PC-3 (cell line): ENCODE measurements at regions of chr2 and their contacts with region 1.

Region 1: DNA sequence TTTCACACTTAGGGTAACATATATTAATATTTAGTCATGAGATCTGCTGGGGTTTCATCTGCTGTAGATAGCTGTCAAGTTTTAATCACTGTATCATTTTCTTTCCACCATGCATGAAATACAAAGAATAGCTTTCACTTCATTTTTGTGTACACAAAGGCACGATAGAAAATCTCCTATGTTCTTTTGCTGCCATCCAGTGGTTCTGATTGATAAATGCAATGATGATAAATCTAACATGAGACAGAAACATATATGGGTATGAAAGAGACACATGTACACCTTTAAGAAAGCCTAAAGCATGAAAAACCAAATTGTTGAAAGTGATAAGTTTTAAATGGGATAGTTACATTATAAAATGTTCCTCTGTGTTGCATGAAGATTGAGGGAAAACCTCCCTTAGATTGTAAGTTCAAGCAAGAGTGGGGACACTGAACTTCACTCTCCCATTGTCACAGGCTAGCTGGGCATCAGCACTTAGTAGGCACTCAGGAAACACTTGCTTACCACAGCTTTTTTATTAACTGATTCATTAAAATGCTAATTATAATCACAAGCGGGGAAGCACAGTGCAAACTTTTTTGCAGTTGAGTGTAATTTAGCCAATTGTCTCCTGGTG is 31.2 kb downstream of the C1D start:
- DNase-seq: peak; percentile 85
- ATAC-seq: peak; percentile 73
- H3K4me3 ChIP-seq: no peak overlapping the region
- H3K27ac ChIP-seq: no peak overlapping the region
- H3K4me1 ChIP-seq: peaks cover 14% of the 10 kb centered on the region
- H3K27me3 ChIP-seq: no peaks in the 10 kb centered on the region
- CTCF ChIP-seq: peak; percentile 88

Region 2: DNA sequence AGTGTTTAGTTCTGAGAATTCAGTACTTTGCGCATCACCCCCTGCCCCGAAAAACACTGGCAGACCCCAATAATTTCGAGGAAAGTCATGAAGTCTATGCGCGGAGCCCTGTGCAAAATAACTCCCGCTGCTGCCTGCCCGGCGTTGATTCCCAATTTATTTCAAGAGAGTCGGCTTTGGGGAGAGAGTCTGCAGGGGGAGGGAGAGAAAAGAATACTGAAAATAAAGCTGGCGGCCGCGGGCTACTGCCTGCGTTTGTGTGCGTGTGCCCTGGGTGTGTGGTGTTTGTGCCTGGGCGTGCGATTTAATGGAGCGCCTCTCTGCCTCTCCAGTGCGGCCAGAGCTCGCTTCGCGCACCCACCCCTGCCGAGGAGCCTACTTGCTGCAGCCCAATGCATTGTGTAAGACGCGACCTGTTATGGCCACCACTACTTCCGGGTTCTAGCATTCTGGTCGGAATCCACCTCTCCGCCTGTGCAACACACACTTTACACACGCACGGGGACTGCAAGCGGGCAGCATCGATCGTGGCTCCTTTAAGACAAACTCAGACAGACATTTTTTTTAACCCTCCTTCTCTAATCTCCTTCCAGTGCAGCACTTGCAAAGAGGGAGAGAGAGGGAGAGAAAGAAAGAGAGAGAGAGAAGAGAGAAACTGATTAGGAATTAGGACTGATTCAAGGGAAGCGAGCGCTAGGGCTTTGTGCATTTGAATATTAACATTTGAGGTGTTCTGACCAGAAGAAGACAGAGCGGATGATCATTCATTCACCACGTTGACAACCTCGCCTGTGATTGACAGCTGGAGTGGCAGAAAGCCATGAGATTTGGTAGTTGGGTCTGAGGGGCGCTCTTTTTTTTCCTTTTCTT is 1596.7 kb before region 1 on chr2 and contains the start of gene MEIS1:
- CTCF ChIA-PET with region 1: no interaction called
- POLR2A ChIA-PET with region 1: no interaction called
- intact Hi-C with region 1: loop called (anchors 5 kb)
- DNase-seq: peak; percentile 90
- ATAC-seq: peak; percentile 77
- H3K4me3 ChIP-seq: peak within 1 kb of the TSS; percentile 91
- H3K27ac ChIP-seq: peak within 1 kb of the TSS; percentile 55
- H3K4me1 ChIP-seq: no peaks in the 10 kb centered on the region
- H3K27me3 ChIP-seq: no peaks in the 10 kb centered on the region
- CTCF ChIP-seq: no peak
- total RNA-seq, gene MEIS1: 4.1 and 5.9 TPM in 2 replicates

Region 3: DNA sequence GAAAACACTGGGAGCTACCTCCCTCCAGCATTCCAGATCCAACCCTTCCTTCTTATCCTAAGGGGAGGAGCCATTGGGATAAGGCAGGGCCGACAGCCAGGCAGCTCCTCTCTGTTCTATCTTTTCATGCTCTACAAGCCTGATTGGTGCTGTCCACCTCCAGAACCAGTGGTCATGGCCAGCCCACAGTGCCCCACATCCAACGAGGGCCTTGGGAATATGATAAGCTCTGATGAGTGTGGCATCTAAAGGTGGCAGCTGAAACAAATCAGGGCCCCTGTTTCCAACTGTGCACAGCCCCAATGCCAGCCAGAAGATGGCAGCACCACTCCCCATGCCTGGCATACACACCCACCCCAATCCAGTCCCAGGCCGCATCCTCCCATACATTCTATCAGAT is 298.1 kb before region 1 on chr2:
- CTCF ChIA-PET with region 1: interaction called, 4 read pairs
- POLR2A ChIA-PET with region 1: no interaction called
- intact Hi-C with region 1: loop called (anchors 1 kb)
- DNase-seq: peak; percentile 62
- ATAC-seq: peak; percentile 98
- H3K4me3 ChIP-seq: no peak overlapping the region
- H3K27ac ChIP-seq: no peak overlapping the region
- H3K4me1 ChIP-seq: no peaks in the 10 kb centered on the region
- H3K27me3 ChIP-seq: no peaks in the 10 kb centered on the region; the same call in 1 of the 2 replicates
- CTCF ChIP-seq: peak; percentile 74

Region 4: DNA sequence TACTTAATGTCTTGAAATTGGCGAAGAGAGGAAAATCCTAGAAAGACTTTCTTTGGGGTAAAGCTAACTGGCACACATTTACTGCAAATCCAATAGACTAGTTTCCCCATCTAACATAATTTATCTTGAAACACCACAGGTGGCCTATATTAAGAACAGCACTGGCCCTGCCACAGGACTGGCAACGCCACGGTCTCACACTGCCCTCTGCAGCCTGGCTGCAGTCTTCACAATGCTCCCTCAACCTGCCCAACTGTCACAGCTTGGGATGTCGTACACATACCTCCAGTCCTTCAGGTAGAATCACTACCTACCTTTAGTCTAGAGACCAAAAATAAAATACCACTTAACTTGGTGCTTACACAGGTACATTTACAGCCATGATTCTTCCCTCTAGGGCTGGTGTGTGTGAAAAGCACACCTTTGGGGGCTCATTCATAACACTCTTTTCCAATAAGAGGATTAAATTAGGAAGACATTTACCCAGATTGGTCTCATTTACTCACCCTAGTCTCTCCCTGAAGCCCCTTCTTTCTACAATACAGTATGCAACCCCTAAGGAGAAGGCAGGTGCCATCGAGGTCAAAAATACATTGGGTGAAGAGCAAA is 191.1 kb before region 1 on chr2:
- CTCF ChIA-PET with region 1: interaction called, 5 read pairs
- POLR2A ChIA-PET with region 1: no interaction called
- intact Hi-C with region 1: loop called (anchors 1 kb)
- DNase-seq: peak; percentile 84
- ATAC-seq: peak; percentile 99
- H3K4me3 ChIP-seq: no peak overlapping the region
- H3K27ac ChIP-seq: no peak overlapping the region
- H3K4me1 ChIP-seq: peaks cover 9% of the 10 kb centered on the region
- H3K27me3 ChIP-seq: no peaks in the 10 kb centered on the region
- CTCF ChIP-seq: peak; percentile 97

Region 5: GRCh38 chr2:67846370-67847070 is 185.1 kb before region 1 on chr2:
- CTCF ChIA-PET with region 1: interaction called, 5 read pairs
- POLR2A ChIA-PET with region 1: no interaction called
- intact Hi-C with region 1: loop called (anchors 1 kb)
- DNase-seq: peak; percentile 98
- ATAC-seq: peak; percentile 71
- H3K4me3 ChIP-seq: peak overlapping the region; percentile 51
- H3K27ac ChIP-seq: 0 out of 2 replicates have a peak overlapping the region, but pooled peaks have one; percentile 2
- H3K4me1 ChIP-seq: peaks cover 8% of the 10 kb centered on the region
- H3K27me3 ChIP-seq: no peaks in the 10 kb centered on the region
- CTCF ChIP-seq: peak; percentile 87

Region 6: DNA sequence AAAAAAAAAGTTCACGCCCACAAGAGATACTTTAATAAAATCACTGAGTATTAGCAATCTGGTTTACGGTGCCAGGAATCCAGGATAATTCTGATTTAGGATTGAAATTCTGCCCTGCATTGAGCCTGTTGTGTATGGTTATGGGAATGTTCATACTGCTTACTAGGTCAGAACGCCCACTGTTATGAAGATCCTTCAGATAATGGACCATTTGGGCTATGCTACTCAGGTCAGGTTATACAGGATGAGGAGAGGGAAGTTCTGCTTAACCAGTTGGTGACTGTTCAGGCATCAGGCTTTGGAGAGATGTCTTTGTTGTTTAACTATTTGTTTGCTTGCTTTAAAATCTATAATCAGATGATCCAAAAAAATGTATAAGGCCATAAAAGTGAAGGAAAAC is 156.7 kb before region 1 on chr2:
- CTCF ChIA-PET with region 1: no interaction called
- POLR2A ChIA-PET with region 1: interaction called, 19 read pairs
- intact Hi-C with region 1: no loop called
- DNase-seq: no peak
- ATAC-seq: no peak
- H3K4me3 ChIP-seq: no peak overlapping the region
- H3K27ac ChIP-seq: no peak overlapping the region
- H3K4me1 ChIP-seq: peaks cover 39% of the 10 kb centered on the region
- H3K27me3 ChIP-seq: no peaks in the 10 kb centered on the region
- CTCF ChIP-seq: no peak

Region 7: DNA sequence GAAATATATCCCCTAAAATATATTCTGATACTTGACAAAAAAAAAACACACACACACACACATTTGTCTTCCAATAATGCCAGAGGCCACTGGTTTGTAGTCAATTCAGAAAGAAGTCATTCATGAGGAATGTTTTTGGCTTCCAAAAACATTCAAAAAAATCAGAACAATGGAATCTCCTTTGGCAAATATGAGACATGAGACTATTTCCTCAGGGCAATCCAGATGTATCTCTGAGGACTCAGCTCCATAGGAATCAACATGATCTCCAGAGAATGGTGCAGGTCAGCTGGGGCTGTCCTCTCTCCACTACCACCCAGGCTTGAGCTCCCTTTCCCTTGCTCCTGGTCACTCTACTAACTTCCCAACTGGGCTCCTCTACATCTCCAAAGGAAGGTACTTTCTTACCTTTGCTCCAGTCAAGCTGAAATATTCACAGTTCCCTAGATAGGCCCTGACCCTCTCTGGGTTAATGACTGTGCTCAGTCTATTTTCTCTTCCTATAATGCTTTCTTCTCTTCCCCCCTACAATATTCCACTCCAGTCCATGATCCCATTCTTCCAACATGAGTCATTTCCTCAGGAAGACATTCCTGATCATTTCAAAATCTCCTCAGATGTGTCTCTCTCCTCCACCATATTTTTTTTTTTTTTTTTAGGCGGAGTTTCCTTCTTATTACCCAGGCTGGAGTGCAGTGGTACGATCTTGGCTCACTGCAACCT is 114.2 kb before region 1 on chr2:
- CTCF ChIA-PET with region 1: interaction called, 5 read pairs
- POLR2A ChIA-PET with region 1: no interaction called
- intact Hi-C with region 1: loop called (anchors 1 kb)
- DNase-seq: peak; percentile 97
- ATAC-seq: peak; percentile 91
- H3K4me3 ChIP-seq: peak overlapping the region; percentile 16; the same call in 1 of the 2 replicates
- H3K27ac ChIP-seq: peak overlapping the region; percentile 85
- H3K4me1 ChIP-seq: peaks cover 15% of the 10 kb centered on the region
- H3K27me3 ChIP-seq: no peaks in the 10 kb centered on the region
- CTCF ChIP-seq: no peak